ENCODE measurements at regions of chr19 and their contacts with region 1.

Region 1: GRCh38 chr19:4815426-4816201 is 15.9 kb downstream of the TICAM1 start:
- DNase-seq: peak; percentile 88
- H3K4me3 ChIP-seq: peak overlapping the region in 1 of 3 experiments; percentile 14
- H3K27ac ChIP-seq: no peak overlapping the region
- H3K4me1 ChIP-seq: peaks cover 5% of the 10 kb centered on the region
- H3K27me3 ChIP-seq: no peaks in the 10 kb centered on the region
- CTCF ChIP-seq: no peak
- POLR2A ChIP-seq: no peak

Region 2: DNA sequence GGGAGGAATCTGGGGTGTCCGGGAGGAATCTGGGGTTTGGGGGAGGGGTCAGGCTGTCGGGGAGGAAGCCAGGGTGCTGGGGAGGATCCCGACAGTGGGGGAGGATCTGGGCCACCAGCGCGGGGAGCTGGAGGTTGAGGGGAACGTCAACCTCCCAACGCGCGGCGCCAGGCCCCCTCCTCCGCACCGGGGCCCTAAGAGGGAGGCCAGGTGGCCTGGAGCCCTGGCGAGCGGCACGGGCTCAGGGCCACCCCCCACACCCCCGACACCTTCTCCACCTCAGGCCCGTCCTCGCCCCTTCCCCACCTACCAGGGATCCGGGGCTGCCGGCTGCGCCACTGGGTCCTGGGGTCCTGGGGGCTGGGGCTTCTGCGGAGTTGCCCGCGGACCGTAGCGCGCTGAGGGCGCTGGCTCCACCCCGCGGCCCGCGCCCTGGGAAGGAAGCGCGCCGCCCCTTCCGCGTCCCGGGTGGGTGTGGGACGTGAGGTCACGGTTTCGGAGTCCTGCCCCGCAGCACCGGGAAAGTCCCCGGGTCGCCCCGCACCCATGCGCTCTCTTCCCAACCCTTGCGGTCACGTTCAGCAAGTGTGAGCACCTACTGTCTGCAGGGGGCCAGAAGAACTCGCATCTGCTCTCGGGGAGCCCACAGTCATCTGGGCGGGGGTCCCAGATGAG is 15.8 kb after region 1 on chr19 and contains the start of gene TICAM1:
- CTCF ChIA-PET with region 1: interaction called, 47 read pairs
- POLR2A ChIA-PET with region 1: no interaction called
- dilution Hi-C with region 1: no loop called
- intact Hi-C with region 1: loop called (anchors 1 kb)
- DNase-seq: peak; percentile 66
- H3K4me3 ChIP-seq: peak within 1 kb of the TSS; percentile 97 to 100 (median 98)
- H3K27ac ChIP-seq: peak within 1 kb of the TSS; percentile 90
- H3K4me1 ChIP-seq: peaks cover 8% of the 10 kb centered on the region
- H3K27me3 ChIP-seq: no peaks in the 10 kb centered on the region
- CTCF ChIP-seq: no peak
- POLR2A ChIP-seq: peak; percentile 83
- total RNA-seq, gene TICAM1: 17.6 and 19.0 TPM in 2 replicates

Region 3: DNA sequence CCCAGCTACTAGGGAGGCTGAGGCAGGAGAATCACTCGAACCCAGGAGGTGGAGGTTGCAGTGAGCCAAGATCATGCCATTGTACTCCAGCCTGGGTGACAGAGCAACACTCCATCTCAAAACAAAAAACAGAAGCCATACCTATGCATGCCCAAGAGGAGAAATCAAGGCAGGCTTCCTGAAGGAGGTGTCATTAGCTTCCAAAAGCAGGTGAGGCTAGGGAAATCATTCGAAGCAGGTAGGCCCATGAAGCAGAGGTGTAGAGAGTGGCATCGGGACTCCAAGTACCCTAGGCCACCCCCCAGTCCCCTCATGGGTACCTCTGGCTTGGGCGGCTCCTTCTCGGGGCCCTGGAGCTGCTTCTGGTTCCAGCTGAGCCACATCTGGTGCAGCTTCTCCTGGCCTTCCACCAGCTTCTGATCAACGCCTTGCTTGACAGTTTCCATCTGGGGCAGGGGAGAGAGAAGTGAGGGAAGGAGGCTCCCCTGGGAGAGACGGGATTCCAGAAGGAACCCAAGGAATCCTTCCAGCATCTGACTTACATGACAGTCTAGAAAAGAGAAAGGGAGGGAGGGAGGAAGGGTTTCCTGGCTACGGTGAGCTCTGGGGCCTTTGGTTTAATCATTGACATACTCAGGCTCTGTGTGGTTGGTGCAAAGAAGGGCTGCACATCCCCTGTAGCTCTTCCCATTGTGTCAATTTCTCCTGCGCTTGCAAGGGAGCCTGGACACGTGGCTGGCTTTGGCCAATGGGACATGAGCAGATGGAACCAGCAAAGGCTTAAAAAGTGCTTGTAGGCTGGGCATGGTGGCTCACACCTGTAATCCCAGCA is 28.9 kb after region 1 on chr19:
- CTCF ChIA-PET with region 1: interaction called, 514 read pairs
- POLR2A ChIA-PET with region 1: interaction called, 6 read pairs
- dilution Hi-C with region 1: no loop called
- intact Hi-C with region 1: no loop called
- DNase-seq: no peak
- H3K4me3 ChIP-seq: no peak overlapping the region
- H3K27ac ChIP-seq: no peak overlapping the region
- H3K4me1 ChIP-seq: no peaks in the 10 kb centered on the region
- H3K27me3 ChIP-seq: no peaks in the 10 kb centered on the region
- CTCF ChIP-seq: no peak
- POLR2A ChIP-seq: no peak

Region 4: GRCh38 chr19:4867534-4868285 is 52.1 kb after region 1 on chr19 and contains the start of gene PLIN3:
- CTCF ChIA-PET with region 1: interaction called, 13 read pairs
- POLR2A ChIA-PET with region 1: no interaction called
- dilution Hi-C with region 1: no loop called
- intact Hi-C with region 1: no loop called
- DNase-seq: peak; percentile 98
- H3K4me3 ChIP-seq: peak within 1 kb of the TSS; percentile 70 to 95 (median 92)
- H3K27ac ChIP-seq: peak within 1 kb of the TSS; percentile 49
- H3K4me1 ChIP-seq: peaks cover 6% of the 10 kb centered on the region
- H3K27me3 ChIP-seq: no peaks in the 10 kb centered on the region
- CTCF ChIP-seq: no peak
- POLR2A ChIP-seq: peak; percentile 43
- total RNA-seq, gene PLIN3: 76.8 and 77.9 TPM in 2 replicates

Region 5: GRCh38 chr19:5031231-5032100 is 215.9 kb after region 1 on chr19:
- CTCF ChIA-PET with region 1: interaction called, 77 read pairs
- POLR2A ChIA-PET with region 1: no interaction called
- dilution Hi-C with region 1: no loop called
- intact Hi-C with region 1: no loop called
- DNase-seq: peak; percentile 61
- H3K4me3 ChIP-seq: no peak overlapping the region
- H3K27ac ChIP-seq: no peak overlapping the region
- H3K4me1 ChIP-seq: no peaks in the 10 kb centered on the region
- H3K27me3 ChIP-seq: no peaks in the 10 kb centered on the region
- CTCF ChIP-seq: peak; percentile 92 to 95
- POLR2A ChIP-seq: no peak

Measured in endothelial cell of umbilical vein (primary cell).